OCI-LY7 (cell line): ENCODE measurements at regions of chr3 and their contacts with region 1.

Region 1: DNA sequence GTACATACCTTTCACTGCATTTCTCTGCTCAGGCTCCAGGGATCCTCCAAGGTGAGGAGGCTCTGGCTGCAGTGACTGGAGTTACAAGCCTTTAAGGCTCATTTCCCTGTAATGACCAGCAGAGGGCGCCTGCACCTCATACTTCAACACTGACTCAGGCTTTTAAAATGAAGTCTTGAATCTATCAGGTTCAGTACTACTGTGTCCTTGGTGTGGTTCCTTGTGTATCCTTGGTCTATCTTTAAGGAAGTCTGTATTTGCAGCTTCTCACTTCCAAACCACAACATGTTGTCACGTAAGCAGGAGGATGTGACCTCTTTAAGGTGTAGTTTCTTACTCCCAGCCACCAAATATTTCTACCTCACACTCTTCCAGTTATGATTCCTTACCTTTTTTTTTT is 122.5 kb upstream of the ZBED2 start:
- DNase-seq: peak; percentile 78
- H3K4me3 ChIP-seq: no peak overlapping the region
- H3K27ac ChIP-seq: no peak overlapping the region
- H3K4me1 ChIP-seq: peaks cover 6% of the 10 kb centered on the region
- CTCF ChIP-seq: peak; percentile 95

Region 2: DNA sequence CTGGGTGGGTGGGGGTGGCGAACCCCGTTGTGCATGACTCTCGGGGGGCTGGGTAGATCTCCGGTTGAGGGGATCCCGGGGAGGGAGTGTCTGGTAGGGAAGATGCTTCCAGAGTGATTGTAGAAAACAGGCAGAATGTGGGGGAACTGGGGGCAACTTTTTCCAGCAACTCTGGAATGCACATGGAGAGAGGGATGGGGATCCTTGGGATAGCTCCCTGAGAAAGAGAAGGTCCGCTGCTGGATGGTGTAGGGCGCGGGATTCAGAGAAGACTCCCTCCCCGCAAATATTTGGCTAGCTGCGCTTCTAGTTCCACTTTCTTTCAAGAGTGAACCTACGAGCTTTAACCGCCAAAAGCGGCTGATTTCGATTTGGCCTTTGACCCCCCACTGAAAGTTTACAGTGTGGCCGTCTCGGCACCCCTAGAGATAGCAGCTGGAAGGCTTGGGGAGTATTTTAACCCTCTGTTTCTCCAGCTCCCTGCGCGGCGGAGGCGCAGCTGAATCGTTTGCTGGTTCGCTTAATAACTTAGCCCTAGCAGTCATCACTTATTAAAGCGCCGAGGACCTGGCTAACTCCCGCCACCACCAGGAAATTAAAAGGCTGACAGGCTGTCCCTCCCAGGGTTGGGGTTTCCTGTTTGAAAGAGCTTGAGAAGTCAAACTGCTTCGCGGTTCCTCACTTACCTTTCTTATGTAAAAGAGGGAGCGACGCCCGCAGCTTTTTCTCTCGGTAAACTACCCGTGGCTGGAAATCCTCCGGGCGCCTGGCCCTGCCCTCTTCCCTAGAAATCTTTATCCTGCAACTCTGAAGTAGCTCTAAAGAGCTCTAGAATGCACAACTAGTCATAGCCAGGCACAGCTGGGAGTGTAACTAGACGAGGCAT is 142.6 kb after region 1 on chr3:
- CTCF ChIA-PET with region 1: no interaction called
- POLR2A ChIA-PET with region 1: interaction called, 4 read pairs
- intact Hi-C with region 1: loop called (anchors 5 kb)
- DNase-seq: peak; percentile 85
- H3K4me3 ChIP-seq: peak overlapping the region; percentile 67
- H3K27ac ChIP-seq: no peak overlapping the region
- H3K4me1 ChIP-seq: peaks cover 5% of the 10 kb centered on the region
- CTCF ChIP-seq: peak; percentile 71

Region 3: GRCh38 chr3:111967651-111968274 is 250.2 kb after region 1 on chr3:
- CTCF ChIA-PET with region 1: interaction called, 4 read pairs
- POLR2A ChIA-PET with region 1: interaction called, 4 read pairs
- intact Hi-C with region 1: loop called (anchors 1 kb)
- DNase-seq: peak; percentile 82
- H3K4me3 ChIP-seq: no peak overlapping the region
- H3K27ac ChIP-seq: no peak overlapping the region
- H3K4me1 ChIP-seq: peaks cover 6% of the 10 kb centered on the region
- CTCF ChIP-seq: peak; percentile 93